ENCODE measurements at regions of chr5 and their contacts with region 1.

Region 1: DNA sequence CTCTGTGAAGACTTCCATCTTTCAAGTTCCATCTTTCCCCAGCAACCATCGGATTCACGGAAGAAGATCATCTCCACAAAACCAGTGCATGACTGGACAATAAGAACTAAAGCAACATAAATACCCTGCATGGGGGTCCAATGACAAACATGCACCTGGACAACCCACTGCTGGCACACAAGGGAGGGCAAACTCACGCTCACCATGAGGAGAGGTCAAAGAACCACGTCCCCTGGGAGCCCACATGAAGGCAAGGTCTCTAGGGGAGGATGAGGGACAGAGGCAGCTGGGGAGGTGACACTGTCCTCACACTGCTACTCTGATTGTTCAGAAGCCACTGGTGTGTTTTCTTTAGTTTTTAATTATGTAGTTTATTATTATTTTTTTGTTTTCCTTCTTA is 190.8 kb downstream of the MED10 start:
- DNase-seq: peak; percentile 3 to 62
- H3K4me3 ChIP-seq: no peak overlapping the region
- H3K27ac ChIP-seq: no peak overlapping the region
- H3K4me1 ChIP-seq: no peaks in the 10 kb centered on the region
- H3K27me3 ChIP-seq: no peaks in the 10 kb centered on the region
- CTCF ChIP-seq: no peak
- POLR2A ChIP-seq: no peak

Region 2: DNA sequence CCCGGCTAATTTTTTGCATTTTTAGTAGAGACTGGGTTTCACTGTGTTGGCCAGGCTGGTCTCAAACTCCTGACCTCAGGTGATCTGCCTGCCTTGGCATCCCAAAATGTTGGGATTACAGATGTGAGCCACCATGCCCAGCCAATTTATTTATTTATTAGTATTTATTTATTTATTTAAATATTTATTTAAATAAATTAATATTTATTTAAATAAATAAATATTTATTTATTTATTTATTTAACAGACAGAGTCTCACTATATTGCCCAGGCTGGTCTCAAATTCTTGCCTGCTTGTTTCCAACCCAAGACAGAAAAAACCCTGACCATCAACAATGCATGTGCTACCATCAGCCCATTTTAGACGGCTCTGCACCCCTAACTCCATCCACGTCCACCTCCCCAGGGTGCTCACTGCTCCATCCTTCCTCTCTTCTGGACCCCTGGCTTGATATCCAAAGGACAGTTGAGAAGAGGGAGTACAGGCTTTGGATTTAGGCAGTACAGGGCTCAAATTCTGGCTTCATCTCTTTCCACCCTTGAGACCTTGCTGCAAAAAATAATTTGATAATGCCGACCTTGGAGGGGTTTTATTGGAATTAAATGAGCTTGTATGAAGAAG is 41.8 kb before region 1 on chr5:
- intact Hi-C with region 1: loop called (anchors 1 kb)
- DNase-seq: peak in 1 of 2 donors; percentile 77
- H3K4me3 ChIP-seq: no peak overlapping the region
- H3K27ac ChIP-seq: no peak overlapping the region
- H3K4me1 ChIP-seq: no peaks in the 10 kb centered on the region
- H3K27me3 ChIP-seq: no peaks in the 10 kb centered on the region
- CTCF ChIP-seq: no peak
- POLR2A ChIP-seq: no peak